Ovary (tissue), 10 donors: ENCODE measurements at regions of chr6 and their contacts with region 1.

Region 1: DNA sequence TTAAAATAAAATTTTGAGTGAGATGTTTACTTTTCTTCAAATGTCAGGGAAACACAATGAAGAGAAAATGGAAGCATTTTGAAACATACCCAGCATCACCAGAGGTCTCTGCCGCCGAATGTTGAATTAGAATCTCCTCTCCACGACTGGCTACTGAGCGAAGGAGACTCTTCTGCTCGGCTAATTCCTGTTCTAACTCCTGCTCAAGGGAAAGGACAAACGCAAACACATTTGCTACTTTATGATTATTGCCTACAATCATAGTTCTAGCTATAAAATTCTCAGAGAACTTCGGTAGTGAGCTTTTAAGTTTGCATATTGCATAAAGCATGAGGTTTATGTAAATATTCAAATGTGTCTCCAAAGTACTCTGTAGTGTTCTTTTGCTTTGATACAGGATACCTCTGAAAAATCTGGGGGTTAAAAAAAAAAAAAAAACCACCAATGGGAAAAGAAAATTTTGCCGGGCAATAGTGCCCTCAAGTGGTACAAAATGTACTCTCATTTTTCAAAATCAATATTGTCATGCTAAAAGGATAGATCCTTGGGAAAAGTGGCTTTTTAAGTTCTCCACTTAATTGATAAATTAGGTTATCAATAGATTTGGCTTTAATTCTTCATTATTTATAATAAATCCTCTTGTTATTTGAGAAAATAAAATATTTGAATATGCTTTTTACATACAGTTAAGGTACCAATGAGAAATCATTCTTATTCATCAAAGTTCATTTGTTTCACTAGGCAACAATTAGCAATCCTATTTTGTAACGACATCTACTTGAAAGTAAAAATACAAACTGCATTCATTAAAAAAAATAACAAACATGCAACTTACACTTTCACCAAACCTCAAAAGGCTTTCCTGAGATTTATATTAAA is 369.0 kb downstream of the SYNE1 start:
- DNase-seq: peak in 1 of 5 donors; percentile 49
- H3K4me3 ChIP-seq: peak overlapping the region; percentile 19
- H3K27ac ChIP-seq: peak overlapping the region in 1 of 2 donors; percentile 11
- H3K4me1 ChIP-seq: peaks cover 13% of the 10 kb centered on the region
- H3K27me3 ChIP-seq: no peaks in the 10 kb centered on the region
- CTCF ChIP-seq: peak; percentile 21 to 46 (median 22)
- EP300 ChIP-seq: no peak
- POLR2A ChIP-seq: no peak

Region 2: DNA sequence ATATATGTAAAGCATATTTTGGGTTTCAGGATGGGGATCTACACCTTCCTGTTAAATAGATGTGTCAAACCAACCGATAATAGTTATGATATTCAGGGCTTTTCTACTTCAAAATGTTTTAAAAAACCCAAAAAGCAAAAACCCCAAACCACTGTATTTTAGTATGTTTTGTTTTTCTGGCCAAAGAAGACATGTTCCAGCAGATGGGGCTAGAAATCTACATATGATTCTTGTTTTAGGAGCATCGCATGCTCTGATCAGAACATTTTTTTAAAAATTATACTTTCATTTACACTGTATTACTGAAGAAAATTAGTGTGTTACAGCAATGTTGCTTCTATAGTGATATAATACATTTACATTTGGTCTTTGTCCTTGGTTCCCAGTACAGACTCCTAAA is 827.3 kb before region 1 on chr6:
- intact Hi-C with region 1: loop called in 1 of 4 experiments (anchors 5 kb)
- DNase-seq: no peak
- H3K4me3 ChIP-seq: no peak overlapping the region
- H3K27ac ChIP-seq: peak overlapping the region in 1 of 2 donors; percentile 39
- H3K4me1 ChIP-seq: peaks cover 7% of the 10 kb centered on the region
- H3K27me3 ChIP-seq: no peaks in the 10 kb centered on the region
- CTCF ChIP-seq: peak in 2 of 3 donors; percentile 62 to 63
- EP300 ChIP-seq: no peak
- POLR2A ChIP-seq: no peak

Region 3: DNA sequence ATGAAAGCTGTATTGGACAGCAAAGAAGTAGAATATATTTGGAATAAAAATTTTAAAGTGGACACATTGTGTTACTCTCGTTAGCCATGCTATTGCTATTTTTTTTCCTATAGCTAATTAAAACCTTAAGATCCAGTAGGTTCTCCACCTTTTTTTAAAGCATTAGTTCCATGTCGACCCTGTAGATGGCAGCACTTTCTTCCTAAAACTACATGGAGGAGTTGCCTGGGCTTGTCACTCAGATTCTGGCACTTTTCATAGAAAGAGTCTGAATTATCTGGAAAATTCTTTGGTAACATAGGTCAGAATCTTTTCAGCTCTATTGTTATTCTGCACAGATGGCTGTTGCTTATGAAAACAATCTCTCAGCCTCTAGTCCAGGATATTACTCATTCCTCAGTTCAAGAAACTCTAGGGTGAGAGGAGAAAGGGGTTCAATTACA is 502.7 kb before region 1 on chr6:
- intact Hi-C with region 1: loop called in 1 of 4 experiments (anchors 10 kb)
- DNase-seq: peak in 3 of 5 donors; percentile 23 to 69 (median 48)
- H3K4me3 ChIP-seq: no peak overlapping the region
- H3K27ac ChIP-seq: no peak overlapping the region
- H3K4me1 ChIP-seq: peaks cover 1% of the 10 kb centered on the region
- H3K27me3 ChIP-seq: no peaks in the 10 kb centered on the region
- CTCF ChIP-seq: peak; percentile 71
- EP300 ChIP-seq: no peak
- POLR2A ChIP-seq: no peak